ENCODE measurements at regions of chr4 and their contacts with region 1.

Region 1: GRCh38 chr4:4666693-4667621 is 125.1 kb upstream of the STX18 start:
- DNase-seq: no peak
- CTCF ChIP-seq: no peak

Region 2: GRCh38 chr4:4685810-4686795 is 19.1 kb after region 1 on chr4:
- CTCF ChIA-PET with region 1: interaction called, 56 read pairs
- POLR2A ChIA-PET with region 1: no interaction called
- DNase-seq: no peak
- CTCF ChIP-seq: no peak

Measured in GM10248 (cell line).